ENCODE measurements at regions of chr2 and their contacts with region 1.

Region 1: DNA sequence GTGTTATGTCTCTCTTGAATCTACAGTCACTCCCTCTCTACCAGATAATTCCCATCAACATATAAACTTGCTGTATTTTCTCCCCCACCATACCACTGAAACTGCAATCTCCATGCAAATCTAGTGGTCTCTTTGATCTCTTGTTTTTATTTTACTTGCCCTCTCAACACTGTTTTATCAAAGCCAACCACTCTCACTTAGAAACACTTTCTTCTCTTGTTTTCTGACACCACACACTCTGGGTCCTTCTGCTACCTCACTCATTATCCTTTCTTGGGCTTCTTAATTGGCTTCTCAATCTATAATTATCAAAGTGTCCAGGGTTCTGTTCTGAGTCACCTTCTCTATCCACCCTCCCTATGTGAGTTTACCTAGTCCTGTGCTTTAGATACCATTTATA is 2.0 kb upstream of the MCFD2 start:
- DNase-seq: no peak
- H3K4me3 ChIP-seq: no peak overlapping the region
- H3K27ac ChIP-seq: no peak overlapping the region
- H3K4me1 ChIP-seq: peaks cover 0 to 9% (median 2%) of the 10 kb centered on the region in 4 experiments; a peak in 4 of 7 replicates
- H3K27me3 ChIP-seq: no peaks in the 10 kb centered on the region
- CTCF ChIP-seq: no peak
- EP300 ChIP-seq: no peak
- POLR2A ChIP-seq: no peak
- RAD21 ChIP-seq: no peak

Region 2: GRCh38 chr2:46929612-46930011 is 12.0 kb after region 1 on chr2:
- CTCF ChIA-PET with region 1: interaction called, 37 read pairs
- POLR2A ChIA-PET with region 1: interaction called, 4 read pairs
- DNase-seq: no peak
- H3K4me3 ChIP-seq: no peak overlapping the region
- H3K27ac ChIP-seq: no peak overlapping the region
- H3K4me1 ChIP-seq: no peaks in the 10 kb centered on the region; a peak in 1 of 7 replicates
- H3K27me3 ChIP-seq: no peaks in the 10 kb centered on the region
- CTCF ChIP-seq: no peak
- EP300 ChIP-seq: no peak
- POLR2A ChIP-seq: no peak
- RAD21 ChIP-seq: no peak

Measured in H1 (cell line).